Activated CD4-positive, alpha-beta T cell treated with anti-CD3 and anti-CD28 coated beads for 36 hours (primary cell): ENCODE measurements at regions of chr5 and their contacts with region 1.

Region 1: DNA sequence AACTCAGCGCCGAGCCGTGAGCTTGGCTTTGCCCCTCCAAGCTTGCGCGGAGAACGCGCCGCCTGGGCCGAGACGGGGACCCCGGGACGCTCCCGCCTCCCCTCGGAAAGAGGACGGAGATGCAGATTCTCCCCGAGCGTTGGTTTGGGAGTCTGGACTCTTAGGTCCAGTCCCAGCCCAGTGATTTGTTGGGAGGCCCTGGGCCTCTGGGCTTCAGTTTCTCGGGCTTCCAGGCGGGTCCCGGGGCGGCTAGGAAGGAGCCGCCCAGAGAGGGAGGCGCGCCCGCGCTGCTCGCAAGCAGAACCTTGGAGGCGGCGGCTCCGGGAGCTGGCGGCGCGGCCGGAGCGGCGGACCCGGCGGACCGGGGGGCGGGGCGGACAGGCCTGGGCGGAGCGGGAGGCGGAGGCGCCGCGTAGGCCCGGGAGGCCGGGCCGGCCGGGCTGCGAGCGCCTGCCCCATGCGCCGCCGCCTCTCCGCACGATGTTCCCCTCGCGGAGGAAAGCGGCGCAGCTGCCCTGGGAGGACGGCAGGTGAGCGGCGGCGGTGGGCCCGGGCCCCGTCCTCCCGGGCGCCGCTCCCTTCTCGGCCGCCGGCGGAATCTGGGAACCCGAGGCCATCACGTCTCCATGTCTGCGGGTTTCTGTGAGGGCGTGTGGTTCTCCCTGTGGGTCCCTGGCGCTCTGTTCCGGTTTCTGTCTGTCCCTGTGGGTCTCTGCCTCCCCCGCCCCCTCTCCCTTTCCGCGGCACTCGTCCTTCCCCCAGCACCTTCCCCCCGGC is at the start of gene B4GALT7:
- DNase-seq: peak; percentile 92
- ATAC-seq: peak; percentile 91
- H3K4me3 Mint-ChIP-seq: peak within 1 kb of the TSS; percentile 93
- H3K27ac Mint-ChIP-seq: peak within 1 kb of the TSS; percentile 89
- H3K4me1 Mint-ChIP-seq: peaks cover 28% of the 10 kb centered on the region
- H3K27me3 Mint-ChIP-seq: no peaks in the 10 kb centered on the region
- total RNA-seq, gene B4GALT7: 16.3 to 18.1 TPM

Region 2: DNA sequence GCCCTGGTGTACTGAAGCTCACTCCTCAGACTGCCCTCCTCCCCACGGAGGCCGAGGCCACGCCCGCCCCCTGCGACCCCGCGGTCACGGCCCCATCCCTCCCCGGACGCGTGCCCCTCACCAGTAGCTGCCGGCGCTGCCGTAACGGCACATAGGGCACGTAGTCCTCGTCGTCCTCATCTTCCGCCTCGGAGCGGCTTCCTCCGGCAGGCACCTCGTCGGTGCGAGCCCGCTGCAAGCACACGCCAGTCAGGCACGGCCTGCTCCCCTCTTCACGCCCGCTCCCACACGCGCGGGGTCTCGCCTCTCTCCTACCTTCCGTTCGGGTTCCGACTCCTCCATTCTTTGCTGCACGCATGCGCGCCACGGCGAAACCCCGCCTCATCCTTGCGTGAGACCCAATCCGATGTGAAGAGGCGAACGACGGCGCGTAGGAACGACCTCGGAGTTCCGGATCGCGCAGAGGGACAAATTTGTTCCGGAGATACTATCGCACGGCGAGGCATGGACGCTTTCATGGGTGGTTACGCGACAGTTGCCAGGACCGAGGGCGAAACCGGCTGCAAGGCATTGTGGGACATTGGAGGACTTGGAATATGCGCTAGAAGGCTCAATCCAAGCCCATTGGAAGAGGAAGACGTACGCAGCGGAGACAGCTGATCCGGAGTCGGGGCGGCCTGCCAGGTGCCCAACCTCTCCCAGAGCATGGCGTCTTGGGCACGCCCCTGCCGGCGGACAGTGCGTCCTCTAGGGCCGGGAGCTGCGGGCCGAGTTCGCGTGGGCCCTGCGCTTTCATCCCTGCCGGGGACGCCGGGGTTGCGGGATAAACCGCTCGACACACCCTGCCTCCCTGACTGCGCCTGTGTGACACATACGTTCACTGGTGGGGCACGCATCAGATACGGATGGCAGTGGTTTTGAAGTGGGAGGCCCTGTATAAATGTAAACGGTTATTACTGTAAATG is 83.0 kb before region 1 on chr5 and contains the start of gene DDX41:
- CTCF ChIA-PET with region 1: interaction called, 3 read pairs
- POLR2A ChIA-PET with region 1: no interaction called
- intact Hi-C with region 1: loop called in 1 of 2 experiments (anchors 1 kb)
- DNase-seq: peak; percentile 98
- ATAC-seq: peak; percentile 91
- H3K4me3 Mint-ChIP-seq: peak within 1 kb of the TSS; percentile 98
- H3K27ac Mint-ChIP-seq: peak within 1 kb of the TSS; percentile 96
- H3K4me1 Mint-ChIP-seq: peaks cover 48% of the 10 kb centered on the region
- H3K27me3 Mint-ChIP-seq: no peaks in the 10 kb centered on the region
- total RNA-seq, gene DDX41: 192 to 197 TPM

Region 3: GRCh38 chr5:177537389-177538361 is 62.2 kb before region 1 on chr5:
- CTCF ChIA-PET with region 1: no interaction called
- POLR2A ChIA-PET with region 1: no interaction called
- intact Hi-C with region 1: no loop called
- DNase-seq: no peak
- ATAC-seq: no peak
- H3K4me3 Mint-ChIP-seq: no peak overlapping the region
- H3K27ac Mint-ChIP-seq: no peak overlapping the region
- H3K4me1 Mint-ChIP-seq: peaks cover 2% of the 10 kb centered on the region
- H3K27me3 Mint-ChIP-seq: no peaks in the 10 kb centered on the region

Region 4: GRCh38 chr5:177554474-177555111 is 45.3 kb before region 1 on chr5 and contains the start of gene FAM193B:
- CTCF ChIA-PET with region 1: no interaction called
- POLR2A ChIA-PET with region 1: no interaction called
- intact Hi-C with region 1: loop called in 1 of 2 experiments (anchors 1 kb)
- DNase-seq: peak; percentile 98
- ATAC-seq: peak; percentile 99
- H3K4me3 Mint-ChIP-seq: peak within 1 kb of the TSS; percentile 80
- H3K27ac Mint-ChIP-seq: peak within 1 kb of the TSS; percentile 66
- H3K4me1 Mint-ChIP-seq: peaks cover 25% of the 10 kb centered on the region
- H3K27me3 Mint-ChIP-seq: no peaks in the 10 kb centered on the region
- total RNA-seq, gene FAM193B: 63.6 to 77.7 TPM

Region 5: DNA sequence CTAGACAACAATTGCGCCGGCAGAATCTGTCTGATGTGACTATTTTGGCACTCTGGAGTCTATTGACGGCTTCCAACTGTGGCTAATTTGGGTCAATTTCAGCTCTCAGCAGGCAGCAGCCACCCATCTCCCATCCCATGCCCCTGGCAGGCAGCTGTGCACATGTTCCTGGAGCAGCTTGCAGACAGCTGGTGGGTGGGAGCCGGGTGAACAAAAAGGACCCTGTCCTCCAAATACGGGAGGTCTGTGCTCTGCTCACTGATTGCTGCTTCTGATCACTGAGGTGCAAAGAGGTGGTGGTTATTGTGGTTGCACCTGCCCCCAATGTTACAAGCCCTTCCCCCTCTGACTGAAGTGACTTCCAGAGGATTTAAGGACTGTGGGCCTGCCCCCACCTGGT is 468.4 kb after region 1 on chr5:
- CTCF ChIA-PET with region 1: no interaction called
- POLR2A ChIA-PET with region 1: interaction called, 10 read pairs
- intact Hi-C with region 1: no loop called
- DNase-seq: no peak
- ATAC-seq: no peak
- H3K4me3 Mint-ChIP-seq: no peak overlapping the region
- H3K27ac Mint-ChIP-seq: no peak overlapping the region
- H3K4me1 Mint-ChIP-seq: peaks cover 3% of the 10 kb centered on the region
- H3K27me3 Mint-ChIP-seq: no peaks in the 10 kb centered on the region

Region 6: GRCh38 chr5:178113199-178113787 is 513.4 kb after region 1 on chr5 and contains the start of gene N4BP3:
- CTCF ChIA-PET with region 1: no interaction called
- POLR2A ChIA-PET with region 1: no interaction called
- intact Hi-C with region 1: no loop called
- DNase-seq: peak; percentile 92
- ATAC-seq: peak; percentile 83
- H3K4me3 Mint-ChIP-seq: peak within 1 kb of the TSS; percentile 88
- H3K27ac Mint-ChIP-seq: peak within 1 kb of the TSS; percentile 73
- H3K4me1 Mint-ChIP-seq: peaks cover 36% of the 10 kb centered on the region
- H3K27me3 Mint-ChIP-seq: peaks cover 6% of the 10 kb centered on the region
- total RNA-seq, gene N4BP3: 3.3 to 3.7 TPM

Region 7: GRCh38 chr5:178130604-178131485 is 530.9 kb after region 1 on chr5 and contains the start of gene RMND5B:
- CTCF ChIA-PET with region 1: no interaction called
- POLR2A ChIA-PET with region 1: no interaction called
- intact Hi-C with region 1: loop called in 1 of 2 experiments (anchors 1 kb)
- DNase-seq: peak; percentile 90
- ATAC-seq: peak; percentile 89
- H3K4me3 Mint-ChIP-seq: peak within 1 kb of the TSS; percentile 80
- H3K27ac Mint-ChIP-seq: peak within 1 kb of the TSS; percentile 90
- H3K4me1 Mint-ChIP-seq: peaks cover 25% of the 10 kb centered on the region
- H3K27me3 Mint-ChIP-seq: no peaks in the 10 kb centered on the region
- total RNA-seq, gene RMND5B: 24.1 to 28.7 TPM